Motor neuron (in vitro differentiated cells): ENCODE measurements at regions of chr15 and their contacts with region 1.

Region 1: DNA sequence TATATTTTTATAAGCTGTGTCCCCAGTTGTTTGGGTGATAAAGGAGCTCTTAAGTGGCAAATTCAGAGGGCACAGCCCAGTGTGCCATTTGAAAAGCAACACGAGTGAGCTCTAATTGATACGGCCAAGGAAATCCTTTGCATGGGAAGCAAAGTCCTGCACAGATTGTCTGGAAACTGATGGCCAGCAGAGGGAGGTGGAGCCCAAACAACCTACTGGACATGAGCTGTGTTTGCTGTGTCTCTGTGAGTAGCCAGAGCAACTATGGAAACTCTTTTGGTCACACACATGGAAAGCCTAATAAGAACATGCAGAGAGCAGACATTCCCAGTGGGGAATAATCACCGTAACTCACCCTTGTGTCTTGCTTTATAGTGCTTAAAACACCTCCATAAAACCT is 24.4 kb downstream of the ONECUT1 start:
- ATAC-seq: peak; percentile 35 to 73 (median 56)
- H3K4me3 ChIP-seq: no peak overlapping the region
- H3K27ac ChIP-seq: no peak overlapping the region
- H3K4me1 ChIP-seq: peaks cover 3 to 10% of the 10 kb centered on the region in 2 donors

Region 2: GRCh38 chr15:53716909-53717876 is 951.4 kb after region 1 on chr15:
- in situ Hi-C with region 1: loop called in 1 of 9 experiments (anchors 25 kb)
- ATAC-seq: peak in 5 of 8 experiments; percentile 43 to 70 (median 56)
- H3K4me3 ChIP-seq: no peak overlapping the region
- H3K27ac ChIP-seq: no peak overlapping the region
- H3K4me1 ChIP-seq: peaks cover 0 to 8% of the 10 kb centered on the region in 2 donors